Transverse colon (tissue), 4 donors: ENCODE measurements at regions of chr4 and their contacts with region 1.

Region 1: GRCh38 chr4:24352112-24352511 is 232.2 kb downstream of the DHX15 start:
- DNase-seq: no peak
- H3K4me3 ChIP-seq: no peak overlapping the region
- H3K27ac ChIP-seq: no peak overlapping the region
- H3K4me1 ChIP-seq: no peaks in the 10 kb centered on the region
- H3K27me3 ChIP-seq: no peaks in the 10 kb centered on the region
- CTCF ChIP-seq: no peak
- EP300 ChIP-seq: no peak
- POLR2A ChIP-seq: no peak

Region 2: GRCh38 chr4:23835774-23836478 is 516.2 kb before region 1 on chr4:
- in situ Hi-C with region 1: no loop called
- intact Hi-C with region 1: loop called (anchors 10 kb)
- DNase-seq: no peak
- H3K4me3 ChIP-seq: no peak overlapping the region
- H3K27ac ChIP-seq: no peak overlapping the region
- H3K4me1 ChIP-seq: no peaks in the 10 kb centered on the region
- H3K27me3 ChIP-seq: no peaks in the 10 kb centered on the region
- CTCF ChIP-seq: no peak
- EP300 ChIP-seq: no peak
- POLR2A ChIP-seq: no peak